T-cell (primary cell): ENCODE measurements at regions of chr19 and their contacts with region 1.

Region 1: DNA sequence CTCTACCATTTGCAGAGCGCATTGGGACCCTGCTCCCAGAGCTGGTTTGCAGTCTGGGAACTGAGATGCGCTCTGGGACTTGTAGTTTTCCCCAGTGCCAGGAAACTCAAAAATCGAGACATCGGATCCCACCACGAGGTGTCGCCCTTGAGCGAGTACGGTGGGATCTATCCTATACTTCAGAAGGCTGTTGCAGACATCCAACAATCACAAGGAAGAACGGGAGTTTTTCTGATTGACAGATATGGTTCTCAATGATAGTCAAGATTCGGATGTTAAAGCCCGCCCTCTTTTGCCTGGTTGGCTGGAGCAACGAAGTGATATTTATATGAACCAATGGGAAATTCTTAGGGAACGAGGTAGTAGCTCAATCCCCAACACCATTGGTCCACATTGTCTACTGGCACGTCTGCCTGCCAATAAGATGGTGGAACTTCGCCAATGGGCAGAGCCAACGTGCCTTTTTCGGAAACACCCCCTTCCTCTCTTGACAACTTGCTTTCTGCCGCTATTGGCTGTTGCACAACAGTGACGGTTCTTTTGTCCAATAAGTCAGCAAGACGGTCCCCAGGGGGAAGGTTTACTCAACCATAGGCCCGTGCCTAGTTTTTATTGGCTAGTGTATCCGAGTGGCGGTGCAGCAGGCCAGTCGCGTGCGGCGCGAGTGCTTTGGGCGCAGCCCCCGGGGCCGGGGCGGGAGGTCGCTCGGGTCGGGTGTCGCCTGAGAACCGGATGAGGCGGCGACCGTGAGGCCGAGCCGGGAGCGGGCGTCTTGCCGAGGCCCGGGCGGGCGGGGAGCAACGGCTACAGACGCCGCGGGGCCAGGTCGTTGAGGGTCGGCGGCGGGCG is at the start of gene DNM2:
- DNase-seq: peak; percentile 93 to 99 (median 97)
- ATAC-seq: peak; percentile 85 to 88 (median 86)
- H3K4me3 ChIP-seq: peak within 1 kb of the TSS; percentile 74 to 83
- H3K4me3 Mint-ChIP-seq: peak within 1 kb of the TSS; percentile 89 to 98 (median 90)
- H3K27ac ChIP-seq: peak within 1 kb of the TSS; percentile 43
- H3K27ac Mint-ChIP-seq: peak within 1 kb of the TSS; percentile 90 to 92
- H3K4me1 ChIP-seq: peaks cover 19 to 57% of the 10 kb centered on the region in 2 experiments
- H3K4me1 Mint-ChIP-seq: peaks cover 32 to 44% (median 38%) of the 10 kb centered on the region in 3 donors
- H3K27me3 ChIP-seq: no peaks in the 10 kb centered on the region
- H3K27me3 Mint-ChIP-seq: no peaks in the 10 kb centered on the region
- total RNA-seq, gene DNM2: 272 to 329 (median 297) TPM

Region 2: GRCh38 chr19:10251792-10252694 is 465.5 kb before region 1 on chr19 and contains the start of gene MRPL4:
- CTCF ChIA-PET with region 1: no interaction called
- POLR2A ChIA-PET with region 1: no interaction called
- DNase-seq: peak; percentile 88 to 98 (median 96)
- ATAC-seq: peak; percentile 96 to 98 (median 98)
- H3K4me3 ChIP-seq: peak within 1 kb of the TSS; percentile 91 to 99
- H3K4me3 Mint-ChIP-seq: peak within 1 kb of the TSS; percentile 94 to 99 (median 96)
- H3K27ac ChIP-seq: peak within 1 kb of the TSS; percentile 60
- H3K27ac Mint-ChIP-seq: peak within 1 kb of the TSS; percentile 93 to 96
- H3K4me1 ChIP-seq: peaks cover 6 to 23% of the 10 kb centered on the region in 2 experiments
- H3K4me1 Mint-ChIP-seq: peaks cover 24 to 29% (median 26%) of the 10 kb centered on the region in 3 donors
- H3K27me3 ChIP-seq: peaks cover 0 to 2% of the 10 kb centered on the region in 2 experiments
- H3K27me3 Mint-ChIP-seq: no peaks in the 10 kb centered on the region
- total RNA-seq, gene MRPL4: 32.9 to 56.6 (median 53.1) TPM

Region 3: GRCh38 chr19:10730923-10731322 is 13.3 kb after region 1 on chr19:
- CTCF ChIA-PET with region 1: interaction called in 1 of 2 experiments, 21 read pairs
- POLR2A ChIA-PET with region 1: interaction called in 1 of 2 experiments, 12 read pairs
- DNase-seq: no peak
- ATAC-seq: no peak
- H3K4me3 ChIP-seq: no peak overlapping the region
- H3K4me3 Mint-ChIP-seq: peak overlapping the region in 1 of 3 donors; percentile 85
- H3K27ac ChIP-seq: peak overlapping the region; percentile 60
- H3K27ac Mint-ChIP-seq: peak overlapping the region; percentile 93 to 97
- H3K4me1 ChIP-seq: peaks cover 14 to 67% of the 10 kb centered on the region in 2 experiments
- H3K4me1 Mint-ChIP-seq: peaks cover 57 to 67% (median 57%) of the 10 kb centered on the region in 3 donors
- H3K27me3 ChIP-seq: no peaks in the 10 kb centered on the region
- H3K27me3 Mint-ChIP-seq: no peaks in the 10 kb centered on the region

Region 4: GRCh38 chr19:10769533-10770491 is 52.2 kb after region 1 on chr19:
- CTCF ChIA-PET with region 1: interaction called, 4 to 10 read pairs
- POLR2A ChIA-PET with region 1: interaction called in 1 of 2 experiments, 3 read pairs
- DNase-seq: peak in 7 of 35 experiments; percentile 13 to 62 (median 25)
- ATAC-seq: peak in 2 of 4 experiments; percentile 54 to 70
- H3K4me3 ChIP-seq: no peak overlapping the region
- H3K4me3 Mint-ChIP-seq: no peak overlapping the region
- H3K27ac ChIP-seq: peak overlapping the region; percentile 12
- H3K27ac Mint-ChIP-seq: peak overlapping the region; percentile 16 to 71
- H3K4me1 ChIP-seq: peaks cover 0 to 46% of the 10 kb centered on the region in 2 experiments
- H3K4me1 Mint-ChIP-seq: peaks cover 21 to 47% (median 31%) of the 10 kb centered on the region in 3 donors
- H3K27me3 ChIP-seq: no peaks in the 10 kb centered on the region
- H3K27me3 Mint-ChIP-seq: no peaks in the 10 kb centered on the region

Region 5: GRCh38 chr19:10864538-10864899 is 146.9 kb after region 1 on chr19:
- CTCF ChIA-PET with region 1: interaction called, 5 to 21 read pairs
- POLR2A ChIA-PET with region 1: interaction called, 3 read pairs
- DNase-seq: peak; percentile 46 to 89 (median 72)
- ATAC-seq: peak; percentile 92 to 93 (median 92)
- H3K4me3 ChIP-seq: no peak overlapping the region
- H3K4me3 Mint-ChIP-seq: no peak overlapping the region
- H3K27ac ChIP-seq: no peak overlapping the region
- H3K27ac Mint-ChIP-seq: peak overlapping the region in 1 of 2 donors; percentile 66
- H3K4me1 ChIP-seq: peaks cover 0 to 10% of the 10 kb centered on the region in 2 experiments
- H3K4me1 Mint-ChIP-seq: peaks cover 12 to 20% (median 17%) of the 10 kb centered on the region in 3 donors
- H3K27me3 ChIP-seq: no peaks in the 10 kb centered on the region
- H3K27me3 Mint-ChIP-seq: no peaks in the 10 kb centered on the region